A673 (cell line): ENCODE measurements at regions of chr12 and their contacts with region 1.

Region 1: GRCh38 chr12:79555028-79555930 is 135.5 kb downstream of the PAWR start:
- DNase-seq: peak; percentile 57
- H3K4me3 ChIP-seq: no peak overlapping the region
- H3K27ac ChIP-seq: no peak overlapping the region
- H3K4me1 ChIP-seq: no peaks in the 10 kb centered on the region
- H3K27me3 ChIP-seq: no peaks in the 10 kb centered on the region
- CTCF ChIP-seq: peak; percentile 79

Region 2: DNA sequence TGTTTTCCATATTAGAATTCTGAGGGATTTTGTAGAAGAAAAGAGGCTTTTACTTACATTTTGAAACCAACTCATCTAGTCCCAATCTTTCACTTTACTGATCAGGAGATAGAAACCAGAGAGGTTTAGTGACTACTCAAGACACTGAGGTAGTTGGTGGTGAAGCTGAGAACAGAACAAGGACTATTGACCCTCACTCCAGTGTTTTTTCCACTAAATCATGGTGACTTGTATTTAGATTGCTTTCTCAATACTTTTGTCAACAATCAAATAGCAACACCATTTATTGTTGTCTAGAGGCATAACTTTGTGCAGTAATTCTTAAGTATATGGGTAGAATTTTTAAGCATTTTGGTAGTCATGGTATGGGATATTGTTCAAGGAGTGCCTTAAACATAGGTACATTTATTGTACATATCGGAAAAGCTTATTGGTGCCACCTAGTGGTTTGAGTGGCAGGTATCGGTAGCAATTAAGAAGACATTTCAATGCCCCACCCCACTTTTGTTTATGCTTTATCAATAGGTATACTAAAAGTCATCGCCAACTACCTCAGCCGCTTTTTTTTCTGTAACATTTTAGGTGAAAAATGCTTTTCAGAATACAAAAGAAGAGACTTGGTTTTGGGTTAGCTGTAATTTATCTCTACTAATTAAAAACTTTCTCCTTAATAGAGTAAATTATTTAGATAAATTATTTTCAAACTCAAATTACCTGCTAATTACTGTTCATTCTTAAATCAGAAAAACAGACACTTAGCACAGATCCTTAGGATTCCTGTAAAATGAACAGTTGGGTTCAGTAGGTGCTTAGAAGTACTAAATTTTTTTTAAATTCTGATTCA is 182.8 kb after region 1 on chr12:
- CTCF ChIA-PET with region 1: no interaction called
- POLR2A ChIA-PET with region 1: no interaction called
- intact Hi-C with region 1: loop called (anchors 2 kb)
- DNase-seq: peak; percentile 72
- H3K4me3 ChIP-seq: no peak overlapping the region
- H3K27ac ChIP-seq: no peak overlapping the region
- H3K4me1 ChIP-seq: no peaks in the 10 kb centered on the region
- H3K27me3 ChIP-seq: no peaks in the 10 kb centered on the region
- CTCF ChIP-seq: peak; percentile 76

Region 3: GRCh38 chr12:80269803-80270552 is 714.7 kb after region 1 on chr12:
- CTCF ChIA-PET with region 1: no interaction called
- POLR2A ChIA-PET with region 1: no interaction called
- intact Hi-C with region 1: loop called (anchors 10 kb)
- DNase-seq: peak; percentile 67
- H3K4me3 ChIP-seq: no peak overlapping the region
- H3K27ac ChIP-seq: no peak overlapping the region
- H3K4me1 ChIP-seq: peaks cover 17% of the 10 kb centered on the region
- H3K27me3 ChIP-seq: no peaks in the 10 kb centered on the region
- CTCF ChIP-seq: peak; percentile 78